ENCODE measurements at regions of chr11 and their contacts with region 1.

Region 1: GRCh38 chr11:74739546-74740270 is 8.5 kb upstream of the CHRDL2 start:
- DNase-seq: peak; percentile 57 to 86
- H3K4me3 ChIP-seq: no peak overlapping the region
- H3K27ac ChIP-seq: no peak overlapping the region
- H3K4me1 ChIP-seq: peaks cover 0 to 9% (median 4%) of the 10 kb centered on the region in 4 donors
- H3K27me3 ChIP-seq: no peaks in the 10 kb centered on the region
- CTCF ChIP-seq: peak in 5 of 7 experiments; percentile 72 to 89 (median 86)
- EP300 ChIP-seq: no peak
- POLR2A ChIP-seq: no peak

Region 2: DNA sequence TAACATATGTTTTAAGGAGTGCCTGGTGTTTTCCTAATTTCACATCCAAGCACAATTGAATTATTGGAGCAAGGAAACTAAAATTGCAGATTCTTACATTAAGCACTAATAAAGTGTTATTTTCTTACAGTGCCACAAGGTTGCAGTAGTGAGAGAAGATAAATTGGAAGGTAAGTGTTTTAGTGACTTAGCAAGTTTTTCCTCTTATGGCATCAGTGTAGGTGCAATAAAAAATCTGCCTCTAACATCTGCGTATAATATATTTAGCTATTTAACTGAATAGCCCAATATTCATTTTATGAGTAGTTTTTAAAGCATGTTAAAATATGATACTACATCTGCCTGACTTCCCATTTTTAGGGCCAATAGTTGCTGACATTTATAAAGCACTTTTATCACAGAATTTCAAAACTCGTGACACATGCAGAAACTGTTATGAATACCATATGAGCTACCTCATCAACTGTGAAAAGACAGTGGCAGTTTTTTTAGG is 128.3 kb before region 1 on chr11:
- intact Hi-C with region 1: loop called (anchors 10 kb)
- DNase-seq: peak in 1 of 2 donors; percentile 71
- H3K4me3 ChIP-seq: no peak overlapping the region
- H3K27ac ChIP-seq: peak overlapping the region in 3 of 5 donors; percentile 51 to 71 (median 59)
- H3K4me1 ChIP-seq: peaks cover 2 to 46% (median 26%) of the 10 kb centered on the region in 4 donors
- H3K27me3 ChIP-seq: no peaks in the 10 kb centered on the region
- CTCF ChIP-seq: peak in 2 of 7 experiments; percentile 21 to 40
- EP300 ChIP-seq: no peak
- POLR2A ChIP-seq: no peak